Activated T-helper 2 cell treated with anti-CD3 and anti-CD28 coated beads, Interferon-gamma antibody, Interleukin-2, Interleukin-4, amounts not matched to agents 10 μg/mL and 5 μg/mL and 100 μg/mL, durations not matched to agents 14 hours and 24 hours and 36 hours (primary cell): ENCODE measurements at regions of chr12 and their contacts with region 1.

Region 1: DNA sequence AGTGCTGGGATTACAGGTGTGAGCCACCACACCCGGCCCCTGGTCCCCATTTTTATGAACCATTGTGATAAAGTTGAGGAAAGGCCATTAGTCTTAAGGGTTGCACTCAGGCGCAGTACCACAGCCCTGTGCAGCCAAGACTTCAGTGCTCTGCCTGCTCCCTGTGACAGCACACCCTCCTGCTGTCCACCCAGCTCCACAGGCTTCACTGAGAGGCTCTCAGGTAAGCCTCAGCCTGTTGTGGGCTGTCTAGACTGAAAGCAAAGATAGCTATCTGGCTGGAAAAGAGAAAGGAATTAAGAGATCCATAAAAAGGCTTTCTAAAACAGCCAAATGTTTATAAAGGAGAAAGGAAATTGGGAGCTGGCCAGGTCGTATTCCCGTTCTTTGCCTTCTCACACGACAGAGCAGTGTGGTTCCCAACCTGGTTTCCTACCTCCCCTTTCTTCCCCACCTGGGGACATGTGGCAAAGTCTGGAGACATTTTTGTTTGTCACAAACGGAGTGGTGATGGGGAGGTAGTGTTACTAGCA is 19.1 kb upstream of the DNM1L start:
- DNase-seq: no peak
- H3K4me3 Mint-ChIP-seq: no peak overlapping the region
- H3K27ac Mint-ChIP-seq: no peak overlapping the region
- H3K4me1 Mint-ChIP-seq: peaks cover 17% of the 10 kb centered on the region
- H3K27me3 Mint-ChIP-seq: no peaks in the 10 kb centered on the region

Region 2: GRCh38 chr12:32455607-32456071 is 204.3 kb before region 1 on chr12:
- intact Hi-C with region 1: loop called (anchors 1 kb)
- DNase-seq: no peak
- H3K4me3 Mint-ChIP-seq: no peak overlapping the region
- H3K27ac Mint-ChIP-seq: no peak overlapping the region
- H3K4me1 Mint-ChIP-seq: peaks cover 2% of the 10 kb centered on the region
- H3K27me3 Mint-ChIP-seq: peaks cover 2% of the 10 kb centered on the region

Region 3: GRCh38 chr12:32558903-32559302 is 101.1 kb before region 1 on chr12:
- intact Hi-C with region 1: loop called (anchors 5 kb)
- DNase-seq: no peak
- H3K4me3 Mint-ChIP-seq: no peak overlapping the region
- H3K27ac Mint-ChIP-seq: no peak overlapping the region
- H3K4me1 Mint-ChIP-seq: peaks cover 31% of the 10 kb centered on the region
- H3K27me3 Mint-ChIP-seq: no peaks in the 10 kb centered on the region

Region 4: DNA sequence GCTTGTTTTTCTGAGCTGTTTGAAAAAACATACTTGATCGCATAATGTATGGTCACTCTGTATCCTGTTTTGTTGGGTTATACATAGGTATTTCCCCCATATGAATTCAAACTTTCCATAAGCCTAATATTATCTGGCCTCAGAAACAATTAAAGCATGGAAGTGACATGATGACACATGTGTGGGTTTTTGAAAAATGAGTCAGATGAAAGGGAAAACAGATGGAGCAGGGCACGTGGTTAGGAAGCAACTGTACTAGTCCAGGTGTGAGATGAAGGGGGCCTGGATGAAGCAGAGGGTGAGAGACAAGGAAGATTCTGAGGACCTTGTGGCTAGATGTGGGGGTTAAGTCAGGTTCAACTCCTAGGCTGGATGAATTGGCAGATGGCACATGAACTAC is 73.6 kb before region 1 on chr12:
- intact Hi-C with region 1: loop called (anchors 5 kb)
- DNase-seq: no peak
- H3K4me3 Mint-ChIP-seq: peak overlapping the region; percentile 0
- H3K27ac Mint-ChIP-seq: peak overlapping the region; percentile 82
- H3K4me1 Mint-ChIP-seq: peaks cover 70% of the 10 kb centered on the region
- H3K27me3 Mint-ChIP-seq: no peaks in the 10 kb centered on the region

Region 5: GRCh38 chr12:32603858-32604257 is 56.1 kb before region 1 on chr12:
- intact Hi-C with region 1: loop called (anchors 5 kb)
- DNase-seq: peak; percentile 61
- H3K4me3 Mint-ChIP-seq: no peak overlapping the region
- H3K27ac Mint-ChIP-seq: peak overlapping the region; percentile 72
- H3K4me1 Mint-ChIP-seq: peaks cover 31% of the 10 kb centered on the region
- H3K27me3 Mint-ChIP-seq: no peaks in the 10 kb centered on the region